Spleen (tissue), 13 donors: ENCODE measurements at regions of chr5 and their contacts with region 1.

Region 1: GRCh38 chr5:104178829-104179456 is 616.4 kb upstream of the NUDT12 start:
- DNase-seq: no peak
- H3K4me3 ChIP-seq: no peak overlapping the region
- H3K27ac ChIP-seq: no peak overlapping the region
- H3K4me1 ChIP-seq: no peaks in the 10 kb centered on the region
- H3K27me3 ChIP-seq: no peaks in the 10 kb centered on the region
- CTCF ChIP-seq: peak in 6 of 11 experiments; percentile 44 to 51 (median 46)
- POLR2A ChIP-seq: no peak

Region 2: DNA sequence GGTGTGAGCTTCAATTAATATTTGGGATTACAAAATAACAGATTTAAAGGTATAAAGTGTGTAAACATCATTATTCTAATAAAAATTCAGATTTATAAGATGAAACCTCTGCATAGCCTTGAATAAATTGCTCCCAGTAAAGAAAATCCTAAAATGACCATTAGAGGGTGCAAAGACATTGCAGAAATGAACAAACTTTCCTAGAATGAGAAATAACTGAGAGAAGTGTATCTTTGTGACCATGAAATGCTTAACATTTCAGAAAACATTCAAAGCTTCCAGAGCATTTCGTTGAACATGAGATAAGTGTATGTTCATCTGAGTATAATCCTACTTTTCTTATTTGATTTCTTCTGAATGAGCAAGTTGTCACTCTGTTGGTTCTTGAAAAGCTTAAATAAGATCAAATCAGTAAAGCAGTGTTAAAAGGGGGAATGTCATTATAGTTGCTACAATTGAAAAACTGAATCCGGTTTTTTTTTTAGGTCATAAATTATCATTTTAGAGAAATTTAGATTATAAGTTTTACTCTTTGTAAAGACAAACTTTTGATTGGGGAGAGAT is 591.7 kb before region 1 on chr5:
- intact Hi-C with region 1: loop called (anchors 5 kb)
- DNase-seq: no peak
- H3K4me3 ChIP-seq: no peak overlapping the region
- H3K27ac ChIP-seq: no peak overlapping the region
- H3K4me1 ChIP-seq: no peaks in the 10 kb centered on the region
- H3K27me3 ChIP-seq: no peaks in the 10 kb centered on the region
- CTCF ChIP-seq: peak in 5 of 11 experiments; percentile 19 to 34 (median 30)
- POLR2A ChIP-seq: no peak

Region 3: GRCh38 chr5:104312485-104312884 is 133.5 kb after region 1 on chr5:
- intact Hi-C with region 1: no loop called
- DNase-seq: no peak
- H3K4me3 ChIP-seq: no peak overlapping the region
- H3K27ac ChIP-seq: no peak overlapping the region
- H3K4me1 ChIP-seq: no peaks in the 10 kb centered on the region
- H3K27me3 ChIP-seq: no peaks in the 10 kb centered on the region
- CTCF ChIP-seq: no peak
- POLR2A ChIP-seq: no peak